Activated CD4-positive, alpha-beta memory T cell treated with anti-CD3 and anti-CD28 coated beads for 36 hours (primary cell): ENCODE measurements at regions of chr22 and their contacts with region 1.

Region 1: GRCh38 chr22:35150183-35151107 is 84.5 kb downstream of the ISX start:
- DNase-seq: peak; percentile 74
- H3K4me3 Mint-ChIP-seq: no peak overlapping the region
- H3K27ac Mint-ChIP-seq: no peak overlapping the region
- H3K4me1 Mint-ChIP-seq: peaks cover 3% of the 10 kb centered on the region
- H3K27me3 Mint-ChIP-seq: peaks cover 20% of the 10 kb centered on the region

Region 2: GRCh38 chr22:33302049-33302545 is 1848.3 kb before region 1 on chr22:
- CTCF ChIA-PET with region 1: interaction called, 13 read pairs
- POLR2A ChIA-PET with region 1: no interaction called
- intact Hi-C with region 1: no loop called
- DNase-seq: peak; percentile 68
- H3K4me3 Mint-ChIP-seq: no peak overlapping the region
- H3K27ac Mint-ChIP-seq: no peak overlapping the region
- H3K4me1 Mint-ChIP-seq: no peaks in the 10 kb centered on the region
- H3K27me3 Mint-ChIP-seq: no peaks in the 10 kb centered on the region

Region 3: DNA sequence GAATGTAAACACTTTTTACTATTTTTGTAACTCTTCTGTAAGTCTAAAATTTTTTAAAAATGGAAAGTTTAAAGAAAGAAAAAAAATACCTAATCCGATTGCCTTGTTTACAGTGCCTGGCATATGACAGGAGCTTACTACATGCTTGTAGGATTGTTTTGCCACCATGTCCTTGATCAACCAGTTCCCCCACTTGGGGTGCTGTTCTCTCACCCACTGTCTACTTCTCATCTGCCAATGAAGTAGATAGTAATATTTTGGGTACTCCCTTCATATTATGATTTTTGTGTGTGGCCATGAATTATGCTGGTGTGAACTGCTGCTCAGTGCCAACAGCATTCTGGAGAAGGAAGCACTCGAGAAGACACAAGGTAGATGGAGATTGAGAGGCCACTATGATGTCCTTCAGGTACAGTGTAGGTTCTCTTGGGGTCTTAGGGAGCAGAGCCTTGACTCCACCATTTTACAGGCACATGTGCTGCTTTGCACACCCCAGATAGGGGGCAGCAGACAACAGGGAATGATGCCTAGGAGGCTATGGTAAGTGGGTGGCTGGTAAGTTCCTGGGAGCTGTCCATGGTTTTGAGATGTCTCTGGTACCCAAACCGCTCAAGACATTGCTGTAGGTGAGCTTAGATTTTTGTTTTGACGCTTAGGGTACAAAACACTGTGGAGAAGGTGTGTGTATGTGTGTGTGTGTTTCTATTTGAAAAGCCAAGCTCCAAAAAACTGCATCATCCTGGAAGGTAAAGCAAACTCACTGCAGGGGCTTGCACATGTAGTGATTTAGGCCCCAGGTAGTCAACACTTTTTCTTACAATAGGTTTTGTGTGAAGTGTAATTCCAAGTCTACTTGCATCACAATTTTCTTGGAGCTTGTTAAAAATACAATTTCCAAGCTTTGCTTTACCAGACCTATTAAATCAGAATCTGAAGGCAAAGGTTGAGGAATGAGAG is 735.7 kb before region 1 on chr22:
- CTCF ChIA-PET with region 1: interaction called, 5 read pairs
- POLR2A ChIA-PET with region 1: no interaction called
- intact Hi-C with region 1: loop called (anchors 10 kb)
- DNase-seq: peak; percentile 46
- H3K4me3 Mint-ChIP-seq: no peak overlapping the region
- H3K27ac Mint-ChIP-seq: no peak overlapping the region
- H3K4me1 Mint-ChIP-seq: no peaks in the 10 kb centered on the region
- H3K27me3 Mint-ChIP-seq: no peaks in the 10 kb centered on the region

Region 4: GRCh38 chr22:35043252-35043931 is 107.1 kb before region 1 on chr22:
- CTCF ChIA-PET with region 1: interaction called, 10 read pairs
- POLR2A ChIA-PET with region 1: no interaction called
- intact Hi-C with region 1: loop called (anchors 2 kb)
- DNase-seq: no peak
- H3K4me3 Mint-ChIP-seq: no peak overlapping the region
- H3K27ac Mint-ChIP-seq: no peak overlapping the region
- H3K4me1 Mint-ChIP-seq: no peaks in the 10 kb centered on the region
- H3K27me3 Mint-ChIP-seq: peaks cover 10% of the 10 kb centered on the region

Region 5: GRCh38 chr22:35102663-35103062 is 47.8 kb before region 1 on chr22:
- CTCF ChIA-PET with region 1: no interaction called
- POLR2A ChIA-PET with region 1: no interaction called
- intact Hi-C with region 1: no loop called
- DNase-seq: no peak
- H3K4me3 Mint-ChIP-seq: no peak overlapping the region
- H3K27ac Mint-ChIP-seq: no peak overlapping the region
- H3K4me1 Mint-ChIP-seq: no peaks in the 10 kb centered on the region
- H3K27me3 Mint-ChIP-seq: peaks cover 5% of the 10 kb centered on the region

Region 6: GRCh38 chr22:35205961-35206360 is 55.5 kb after region 1 on chr22:
- CTCF ChIA-PET with region 1: no interaction called
- POLR2A ChIA-PET with region 1: no interaction called
- intact Hi-C with region 1: no loop called
- DNase-seq: no peak
- H3K4me3 Mint-ChIP-seq: no peak overlapping the region
- H3K27ac Mint-ChIP-seq: no peak overlapping the region
- H3K4me1 Mint-ChIP-seq: no peaks in the 10 kb centered on the region
- H3K27me3 Mint-ChIP-seq: peaks cover 5% of the 10 kb centered on the region

Region 7: DNA sequence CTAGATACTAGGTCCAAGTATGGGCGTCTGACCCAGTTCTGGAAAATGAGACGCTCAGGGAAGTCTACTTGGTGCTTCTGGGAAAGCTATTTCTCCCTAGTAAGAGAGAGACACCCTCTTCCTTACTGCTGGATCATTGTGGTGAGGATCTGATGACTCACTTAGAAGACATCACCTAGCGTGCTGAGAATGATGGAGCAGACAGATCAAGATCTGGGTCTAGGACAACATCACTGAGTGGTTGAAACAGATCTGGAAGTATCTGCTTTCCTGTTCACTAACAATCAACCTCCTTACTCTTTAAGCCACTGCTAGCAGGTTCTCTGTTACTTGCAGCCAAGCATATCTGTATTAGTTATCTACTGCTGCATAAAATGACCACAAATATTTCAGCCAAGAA is 68.6 kb after region 1 on chr22:
- CTCF ChIA-PET with region 1: no interaction called
- POLR2A ChIA-PET with region 1: no interaction called
- intact Hi-C with region 1: no loop called
- DNase-seq: no peak
- H3K4me3 Mint-ChIP-seq: no peak overlapping the region
- H3K27ac Mint-ChIP-seq: no peak overlapping the region
- H3K4me1 Mint-ChIP-seq: no peaks in the 10 kb centered on the region
- H3K27me3 Mint-ChIP-seq: peaks cover 4% of the 10 kb centered on the region

Region 8: DNA sequence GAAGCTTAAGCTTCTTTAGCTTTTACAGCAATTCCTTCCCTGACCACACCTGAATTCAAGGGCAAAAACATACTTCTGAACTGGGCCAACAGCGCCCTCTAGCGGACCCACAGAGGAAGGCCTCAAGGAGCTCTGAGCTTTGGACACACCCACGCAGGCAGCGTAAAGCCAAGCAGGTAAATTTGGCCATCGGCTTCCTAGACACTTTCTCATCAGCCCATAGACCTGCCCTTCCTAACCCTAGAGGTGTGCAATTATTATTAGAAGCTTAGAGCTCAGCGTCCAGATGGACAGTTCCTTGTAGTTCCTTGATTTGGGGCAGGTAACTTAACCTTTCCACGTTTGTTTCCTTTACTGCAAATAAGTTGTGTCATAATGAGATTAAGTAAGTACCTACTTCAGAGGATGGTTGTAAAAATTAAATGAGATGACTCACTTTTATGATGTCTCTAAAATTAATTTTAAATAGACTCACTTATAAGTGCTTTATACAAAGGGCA is 81.2 kb after region 1 on chr22:
- CTCF ChIA-PET with region 1: interaction called, 16 read pairs
- POLR2A ChIA-PET with region 1: no interaction called
- intact Hi-C with region 1: no loop called
- DNase-seq: peak; percentile 84
- H3K4me3 Mint-ChIP-seq: no peak overlapping the region
- H3K27ac Mint-ChIP-seq: no peak overlapping the region
- H3K4me1 Mint-ChIP-seq: peaks cover 2% of the 10 kb centered on the region
- H3K27me3 Mint-ChIP-seq: peaks cover 22% of the 10 kb centered on the region